Caco-2 (cell line): ENCODE measurements at regions of chrX and their contacts with region 1.

Region 1: GRCh38 chrX:49884290-49884862 is 5.1 kb downstream of the USP27X start:
- DNase-seq: peak; percentile 62 to 71
- H3K4me3 ChIP-seq: no peak overlapping the region
- H3K4me3 Mint-ChIP-seq: no peak overlapping the region
- H3K27ac Mint-ChIP-seq: peak overlapping the region; percentile 28
- H3K4me1 ChIP-seq: 0 out of 2 replicates have a peak, but pooled peaks cover 10% of the 10 kb centered on the region
- H3K4me1 Mint-ChIP-seq: peaks cover 15% of the 10 kb centered on the region
- H3K27me3 ChIP-seq: no peaks in the 10 kb centered on the region
- H3K27me3 Mint-ChIP-seq: no peaks in the 10 kb centered on the region
- CTCF ChIP-seq: peak; percentile 43 to 62

Region 2: DNA sequence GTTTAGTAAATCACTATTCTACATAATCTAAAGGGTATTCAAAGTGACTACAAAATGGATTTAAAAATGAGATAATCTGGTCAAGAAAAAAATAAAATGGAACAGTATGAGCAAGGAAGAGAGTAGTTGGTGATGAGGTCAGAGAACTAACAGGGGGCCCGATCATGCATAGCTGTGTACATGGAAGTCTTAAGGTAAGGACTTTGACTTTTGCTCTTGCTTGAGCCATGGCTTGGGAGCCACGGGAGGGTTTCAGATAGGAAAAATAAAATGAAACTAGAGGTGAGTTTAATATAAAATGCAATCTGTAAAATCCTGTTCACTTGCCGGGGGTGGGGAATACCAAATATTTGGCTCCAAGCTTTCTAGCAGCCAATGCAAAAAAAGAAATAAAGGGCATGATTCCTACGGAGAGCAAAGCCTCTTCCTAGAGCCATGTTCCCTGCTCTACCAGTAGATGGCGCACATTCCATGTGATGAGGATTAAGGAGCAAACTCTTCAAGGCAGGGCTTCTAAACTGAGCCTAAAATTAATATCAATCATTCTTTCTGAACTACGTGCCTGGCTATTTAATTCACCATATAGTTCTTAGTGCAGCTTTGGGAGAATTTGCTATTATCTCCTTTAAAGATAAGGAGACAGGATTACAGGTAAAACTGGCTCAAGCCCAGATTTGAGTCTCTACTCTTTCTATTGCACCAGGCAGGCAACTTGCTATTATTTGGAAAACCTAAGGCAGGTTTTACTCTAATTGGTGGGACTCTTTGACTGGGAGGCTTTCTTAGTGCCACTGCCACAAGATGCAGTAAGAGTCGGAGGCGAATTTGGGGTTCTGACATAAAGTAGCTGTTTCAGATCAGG is 31.2 kb after region 1 on chrX:
- CTCF ChIA-PET with region 1: interaction called, 3 read pairs
- POLR2A ChIA-PET with region 1: no interaction called
- intact Hi-C with region 1: loop called (anchors 1 kb)
- DNase-seq: peak; percentile 45 to 56
- H3K4me3 ChIP-seq: no peak overlapping the region
- H3K4me3 Mint-ChIP-seq: no peak overlapping the region
- H3K27ac Mint-ChIP-seq: no peak overlapping the region
- H3K4me1 ChIP-seq: peaks cover 4% of the 10 kb centered on the region; the same call in 1 of the 2 replicates
- H3K4me1 Mint-ChIP-seq: peaks cover 10% of the 10 kb centered on the region
- H3K27me3 ChIP-seq: no peaks in the 10 kb centered on the region
- H3K27me3 Mint-ChIP-seq: no peaks in the 10 kb centered on the region
- CTCF ChIP-seq: peak; percentile 62 to 80

Region 3: GRCh38 chrX:50081282-50081889 is 197.0 kb after region 1 on chrX:
- CTCF ChIA-PET with region 1: no interaction called
- POLR2A ChIA-PET with region 1: no interaction called
- intact Hi-C with region 1: loop called (anchors 1 kb)
- DNase-seq: peak; percentile 53
- H3K4me3 ChIP-seq: no peak overlapping the region
- H3K4me3 Mint-ChIP-seq: no peak overlapping the region
- H3K27ac Mint-ChIP-seq: no peak overlapping the region
- H3K4me1 ChIP-seq: peaks cover under 1% of the 10 kb centered on the region; the same call in 1 of the 2 replicates
- H3K4me1 Mint-ChIP-seq: peaks cover 21% of the 10 kb centered on the region
- H3K27me3 ChIP-seq: no peaks in the 10 kb centered on the region
- H3K27me3 Mint-ChIP-seq: no peaks in the 10 kb centered on the region
- CTCF ChIP-seq: peak in 1 of 2 experiments; percentile 60